ENCODE measurements at regions of chr11 and their contacts with region 1.

Region 1: DNA sequence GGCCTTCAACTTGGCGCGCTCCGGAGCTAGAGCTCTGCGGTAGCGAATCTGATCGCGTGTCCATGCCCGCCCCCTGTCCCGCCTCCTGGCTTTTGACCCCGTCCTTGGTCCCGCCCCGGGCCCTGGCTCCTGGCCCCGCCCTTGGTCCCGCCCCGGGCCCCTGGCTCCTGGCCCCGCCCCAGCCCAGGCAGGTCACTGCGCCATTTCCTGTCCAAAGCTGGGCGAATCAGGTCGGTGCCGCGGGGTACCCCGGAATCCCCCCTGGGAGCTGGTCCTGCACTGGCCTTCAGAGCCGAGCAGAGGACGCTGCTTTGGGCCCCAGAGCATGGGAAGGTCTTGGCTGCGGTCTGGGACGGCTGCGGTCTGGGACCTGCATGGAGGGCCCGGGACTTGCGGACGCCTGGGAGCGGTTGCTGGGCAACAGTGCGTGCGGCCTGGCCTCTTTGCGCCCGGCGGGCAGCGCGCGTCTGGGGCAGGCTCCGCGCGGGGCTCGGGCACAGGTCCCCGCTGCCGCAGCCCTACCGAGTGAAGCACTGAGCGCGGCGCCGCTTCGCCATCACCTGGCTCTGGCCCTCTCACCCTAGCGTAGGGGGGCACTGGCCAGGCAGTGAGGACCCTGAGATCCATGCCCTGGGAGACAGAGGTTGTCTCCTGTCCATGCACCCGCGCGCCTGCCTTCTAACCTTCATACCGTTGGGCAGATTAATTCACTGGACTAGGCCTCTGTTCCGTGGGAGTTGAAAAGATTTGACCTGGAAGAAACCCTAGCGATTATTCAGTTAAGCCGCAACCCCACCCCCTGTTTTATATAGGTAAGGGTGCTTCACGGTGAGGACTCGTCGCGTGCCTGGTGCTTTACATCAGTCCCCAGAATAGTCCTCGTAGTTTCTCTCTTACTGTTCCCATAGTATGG is at the start of gene TTC12:
- DNase-seq: peak; percentile 98
- H3K4me3 Mint-ChIP-seq: peak within 1 kb of the TSS; percentile 82
- H3K27ac Mint-ChIP-seq: peak within 1 kb of the TSS; percentile 74
- H3K4me1 Mint-ChIP-seq: peaks cover 14% of the 10 kb centered on the region
- H3K27me3 Mint-ChIP-seq: no peaks in the 10 kb centered on the region
- total RNA-seq, gene TTC12: 5.3 and 9.2 TPM in 2 replicates

Region 2: GRCh38 chr11:112226062-112226830 is 1088.4 kb before region 1 on chr11 and contains the start of gene PTS:
- intact Hi-C with region 1: loop called (anchors 2 kb)
- DNase-seq: peak; percentile 96
- H3K4me3 Mint-ChIP-seq: peak within 1 kb of the TSS; percentile 94
- H3K27ac Mint-ChIP-seq: peak within 1 kb of the TSS; percentile 94
- H3K4me1 Mint-ChIP-seq: peaks cover 17% of the 10 kb centered on the region
- H3K27me3 Mint-ChIP-seq: peaks cover 3% of the 10 kb centered on the region
- total RNA-seq, gene PTS: 33.1 and 34.4 TPM in 2 replicates

Region 3: GRCh38 chr11:113875234-113876073 is 560.8 kb after region 1 on chr11 and contains the start of gene USP28:
- intact Hi-C with region 1: loop called (anchors 2 kb)
- DNase-seq: peak; percentile 95
- H3K4me3 Mint-ChIP-seq: peak within 1 kb of the TSS; percentile 91
- H3K27ac Mint-ChIP-seq: peak within 1 kb of the TSS; percentile 96
- H3K4me1 Mint-ChIP-seq: peaks cover 47% of the 10 kb centered on the region
- H3K27me3 Mint-ChIP-seq: no peaks in the 10 kb centered on the region
- total RNA-seq, gene USP28: 34.8 and 36.2 TPM in 2 replicates